ENCODE measurements at regions of chr2 and their contacts with region 1.

Region 1: DNA sequence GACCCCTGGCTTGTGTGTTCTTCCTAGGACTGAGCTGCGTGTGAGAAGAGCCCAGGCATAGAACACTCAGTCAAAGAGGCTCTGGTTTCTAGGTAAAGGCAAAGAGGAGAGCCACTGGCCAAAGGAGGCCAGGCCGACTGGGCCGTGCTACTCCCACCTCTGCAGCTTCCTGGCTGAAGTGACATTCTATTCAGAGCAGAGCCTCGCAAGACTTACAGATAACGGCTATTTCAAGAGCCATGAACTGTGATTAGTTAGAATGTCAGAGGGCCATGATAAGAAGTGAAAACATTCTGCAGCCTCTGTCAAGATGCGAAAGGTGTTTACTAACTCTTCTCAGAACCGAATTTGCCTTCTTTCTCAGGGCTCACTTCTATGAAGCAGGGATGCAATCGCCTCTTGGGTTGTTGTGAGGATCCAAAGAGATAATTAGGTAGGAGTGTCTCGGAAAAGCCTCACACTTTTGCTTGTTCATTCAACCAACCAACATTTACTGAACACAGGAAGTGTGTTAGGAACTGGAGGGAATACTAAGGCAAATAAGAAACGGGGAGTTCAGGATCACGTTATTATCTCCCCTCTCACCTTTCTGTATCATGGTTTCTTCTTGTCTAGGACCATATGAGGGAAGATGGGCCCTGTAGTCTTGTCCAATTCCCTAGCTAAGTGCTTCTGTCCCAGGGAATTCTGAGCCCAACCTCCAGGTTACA is 3.4 kb upstream of the DNAJC5G start:
- DNase-seq: no peak
- ATAC-seq: no peak
- H3K4me3 ChIP-seq: no peak overlapping the region
- H3K27ac ChIP-seq: no peak overlapping the region
- H3K4me1 ChIP-seq: no peaks in the 10 kb centered on the region
- H3K27me3 ChIP-seq: peaks cover 0 to 5% (median 3%) of the 10 kb centered on the region in 3 donors
- CTCF ChIP-seq: no peak
- POLR2A ChIP-seq: no peak

Region 2: GRCh38 chr2:26964446-26965130 is 307.2 kb before region 1 on chr2:
- in situ Hi-C with region 1: loop called in 2 of 4 experiments (anchors 25 kb)
- intact Hi-C with region 1: loop called (anchors 5 kb)
- DNase-seq: no peak
- ATAC-seq: no peak
- H3K4me3 ChIP-seq: no peak overlapping the region
- H3K27ac ChIP-seq: no peak overlapping the region
- H3K4me1 ChIP-seq: no peaks in the 10 kb centered on the region
- H3K27me3 ChIP-seq: no peaks in the 10 kb centered on the region
- CTCF ChIP-seq: no peak
- POLR2A ChIP-seq: no peak

Measured in gastrocnemius medialis (tissue), 4 donors.